Activated CD8-positive, alpha-beta T cell treated with anti-CD3 and anti-CD28 coated beads for 36 hours (primary cell): ENCODE measurements at regions of chr16 and their contacts with region 1.

Region 1: GRCh38 chr16:84186685-84187437 is at the start of gene TAF1C:
- DNase-seq: peak; percentile 97
- ATAC-seq: peak; percentile 98
- H3K4me3 Mint-ChIP-seq: peak within 1 kb of the TSS; percentile 94
- H3K27ac Mint-ChIP-seq: peak within 1 kb of the TSS; percentile 95
- H3K4me1 Mint-ChIP-seq: peaks cover 14% of the 10 kb centered on the region
- H3K27me3 Mint-ChIP-seq: no peaks in the 10 kb centered on the region
- CTCF ChIP-seq: peak; percentile 86
- total RNA-seq, gene TAF1C: 59.3 to 62.6 TPM

Region 2: GRCh38 chr16:84072014-84072413 is 114.8 kb before region 1 on chr16:
- CTCF ChIA-PET with region 1: interaction called, 11 read pairs
- POLR2A ChIA-PET with region 1: no interaction called
- intact Hi-C with region 1: no loop called
- DNase-seq: no peak
- ATAC-seq: no peak
- H3K4me3 Mint-ChIP-seq: no peak overlapping the region
- H3K27ac Mint-ChIP-seq: no peak overlapping the region
- H3K4me1 Mint-ChIP-seq: no peaks in the 10 kb centered on the region
- H3K27me3 Mint-ChIP-seq: no peaks in the 10 kb centered on the region
- CTCF ChIP-seq: no peak

Region 3: DNA sequence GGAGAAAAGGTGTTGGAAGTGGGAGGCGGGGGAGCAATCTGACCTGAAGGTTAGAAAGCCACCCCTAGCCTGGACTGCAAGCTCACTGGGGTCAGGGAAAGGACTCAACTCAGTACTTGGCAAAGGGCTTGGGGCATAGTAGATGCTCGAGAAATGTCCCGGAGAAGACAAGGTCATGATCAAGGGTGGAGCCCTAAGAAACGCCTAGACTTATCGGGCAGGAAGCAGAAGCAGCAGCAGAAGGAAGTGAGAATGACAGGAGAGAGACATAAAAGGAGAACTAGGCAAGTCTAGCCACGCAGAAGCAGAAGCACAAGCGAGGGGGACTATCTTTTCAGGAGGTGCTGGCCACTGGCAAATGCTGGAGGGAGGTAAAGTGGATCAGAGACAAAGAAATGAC is 420.8 kb after region 1 on chr16:
- CTCF ChIA-PET with region 1: no interaction called
- POLR2A ChIA-PET with region 1: no interaction called
- intact Hi-C with region 1: no loop called
- DNase-seq: no peak
- ATAC-seq: peak; percentile 17
- H3K4me3 Mint-ChIP-seq: peak overlapping the region; percentile 43
- H3K27ac Mint-ChIP-seq: peak overlapping the region; percentile 81
- H3K4me1 Mint-ChIP-seq: peaks cover 92% of the 10 kb centered on the region
- H3K27me3 Mint-ChIP-seq: no peaks in the 10 kb centered on the region
- CTCF ChIP-seq: no peak